HEK293T (cell line): ENCODE measurements at regions of chr17 and their contacts with region 1.

Region 1: GRCh38 chr17:1055751-1056645 is 59.1 kb downstream of the TIMM22 start:
- DNase-seq: peak; percentile 86

Region 2: DNA sequence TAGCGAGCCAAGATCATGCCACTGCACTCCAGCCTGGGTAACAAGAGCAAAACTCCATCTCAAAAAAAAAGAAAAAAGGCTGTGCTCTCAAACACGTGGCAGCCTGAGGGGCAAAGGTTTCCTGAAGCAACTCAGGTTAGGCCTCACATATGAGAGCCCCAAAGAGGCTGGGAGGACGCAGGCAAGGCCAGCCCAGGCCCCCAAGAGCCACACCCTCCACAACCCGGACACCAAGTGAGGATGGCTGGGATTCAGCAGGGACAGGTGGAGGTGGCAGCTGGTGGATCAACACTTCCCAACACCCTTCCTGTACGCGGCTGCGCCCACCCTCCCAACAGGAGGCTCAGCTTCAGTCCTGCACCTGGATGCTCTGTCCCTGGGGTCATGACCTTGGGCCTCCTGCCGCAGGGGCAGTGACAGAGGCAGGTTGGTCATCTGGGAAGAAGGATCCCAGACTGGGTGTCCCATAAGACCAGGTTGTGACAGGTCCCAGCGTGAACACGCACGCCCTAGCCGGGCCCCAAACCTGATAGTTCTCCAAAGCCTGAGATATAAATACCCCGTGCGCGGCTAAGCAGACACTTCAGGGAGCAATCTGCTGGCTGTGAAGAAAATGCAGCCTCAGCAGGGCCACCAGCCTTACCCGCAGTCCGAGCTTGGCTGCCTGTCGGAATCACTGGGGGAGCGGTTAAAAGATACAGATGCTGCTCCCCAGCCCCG is 19.0 kb after region 1 on chr17:
- CTCF ChIA-PET with region 1: interaction called, 10 read pairs
- POLR2A ChIA-PET with region 1: no interaction called
- DNase-seq: no peak

Region 3: GRCh38 chr17:1116602-1117001 is 60.6 kb after region 1 on chr17:
- CTCF ChIA-PET with region 1: interaction called, 11 read pairs
- POLR2A ChIA-PET with region 1: no interaction called
- DNase-seq: no peak

Region 4: GRCh38 chr17:1147661-1148060 is 91.7 kb after region 1 on chr17:
- CTCF ChIA-PET with region 1: interaction called, 27 read pairs
- POLR2A ChIA-PET with region 1: interaction called, 3 read pairs
- DNase-seq: peak; percentile 74